Caco-2 (cell line): ENCODE measurements at regions of chr1 and their contacts with region 1.

Region 1: GRCh38 chr1:170530972-170531757 is 801 bp upstream of the GORAB start:
- DNase-seq: no peak
- H3K4me3 ChIP-seq: peak overlapping the region; percentile 71
- H3K4me3 Mint-ChIP-seq: no peak overlapping the region
- H3K27ac Mint-ChIP-seq: no peak overlapping the region
- H3K4me1 ChIP-seq: peaks cover 6% of the 10 kb centered on the region; the same call in 1 of the 2 replicates
- H3K4me1 Mint-ChIP-seq: no peaks in the 10 kb centered on the region
- H3K27me3 ChIP-seq: no peaks in the 10 kb centered on the region
- H3K27me3 Mint-ChIP-seq: peaks cover 6% of the 10 kb centered on the region
- CTCF ChIP-seq: no peak

Region 2: DNA sequence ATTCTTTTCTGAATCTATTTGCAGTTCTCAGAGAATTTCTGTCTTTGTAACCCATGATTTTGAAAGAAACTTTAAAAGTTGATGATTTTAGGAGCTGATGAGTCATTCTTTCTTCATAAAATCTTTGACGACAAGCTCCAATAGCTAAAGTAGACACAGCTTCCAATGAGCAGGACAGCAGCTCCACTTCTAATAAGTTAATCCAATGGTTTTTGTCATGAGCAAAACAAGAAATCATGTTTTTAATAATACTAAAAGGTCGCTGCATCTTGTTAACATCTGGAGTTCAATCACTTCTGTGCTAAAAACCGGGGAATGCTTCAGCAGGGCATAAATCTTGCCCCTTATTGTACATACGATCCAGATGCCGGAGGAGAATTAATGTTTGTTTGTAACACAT is 48.1 kb before region 1 on chr1:
- CTCF ChIA-PET with region 1: no interaction called
- POLR2A ChIA-PET with region 1: interaction called, 13 read pairs
- intact Hi-C with region 1: no loop called
- DNase-seq: no peak
- H3K4me3 ChIP-seq: no peak overlapping the region
- H3K4me3 Mint-ChIP-seq: no peak overlapping the region
- H3K27ac Mint-ChIP-seq: no peak overlapping the region
- H3K4me1 ChIP-seq: no peaks in the 10 kb centered on the region
- H3K4me1 Mint-ChIP-seq: no peaks in the 10 kb centered on the region
- H3K27me3 ChIP-seq: no peaks in the 10 kb centered on the region
- H3K27me3 Mint-ChIP-seq: no peaks in the 10 kb centered on the region
- CTCF ChIP-seq: no peak

Region 3: GRCh38 chr1:170545476-170545875 is 14.3 kb after region 1 on chr1:
- CTCF ChIA-PET with region 1: no interaction called
- POLR2A ChIA-PET with region 1: no interaction called
- intact Hi-C with region 1: no loop called
- DNase-seq: no peak
- H3K4me3 ChIP-seq: no peak overlapping the region
- H3K4me3 Mint-ChIP-seq: no peak overlapping the region
- H3K27ac Mint-ChIP-seq: no peak overlapping the region
- H3K4me1 ChIP-seq: no peaks in the 10 kb centered on the region
- H3K4me1 Mint-ChIP-seq: no peaks in the 10 kb centered on the region
- H3K27me3 ChIP-seq: no peaks in the 10 kb centered on the region
- H3K27me3 Mint-ChIP-seq: no peaks in the 10 kb centered on the region
- CTCF ChIP-seq: no peak

Region 4: GRCh38 chr1:170634293-170634692 is 103.1 kb after region 1 on chr1:
- CTCF ChIA-PET with region 1: no interaction called
- POLR2A ChIA-PET with region 1: interaction called, 10 read pairs
- intact Hi-C with region 1: no loop called
- DNase-seq: no peak
- H3K4me3 ChIP-seq: no peak overlapping the region
- H3K4me3 Mint-ChIP-seq: no peak overlapping the region
- H3K27ac Mint-ChIP-seq: no peak overlapping the region
- H3K4me1 ChIP-seq: no peaks in the 10 kb centered on the region
- H3K4me1 Mint-ChIP-seq: no peaks in the 10 kb centered on the region
- H3K27me3 ChIP-seq: no peaks in the 10 kb centered on the region
- H3K27me3 Mint-ChIP-seq: peaks cover 4% of the 10 kb centered on the region
- CTCF ChIP-seq: no peak